Activated naive CD4-positive, alpha-beta T cell treated with anti-CD3 and anti-CD28 coated beads for 36 hours (primary cell): ENCODE measurements at regions of chr15 and their contacts with region 1.

Region 1: GRCh38 chr15:37100109-37100965 is at the start of gene MEIS2:
- DNase-seq: peak; percentile 51
- H3K4me3 Mint-ChIP-seq: peak within 1 kb of the TSS; percentile 89
- H3K27ac Mint-ChIP-seq: no peak within 1 kb of the TSS
- H3K4me1 Mint-ChIP-seq: peaks cover 45% of the 10 kb centered on the region
- H3K27me3 Mint-ChIP-seq: peaks cover 88% of the 10 kb centered on the region
- total RNA-seq, gene MEIS2: not detected

Region 2: GRCh38 chr15:35519541-35520149 is 1580.7 kb before region 1 on chr15:
- CTCF ChIA-PET with region 1: no interaction called
- intact Hi-C with region 1: loop called (anchors 10 kb)
- DNase-seq: no peak
- H3K4me3 Mint-ChIP-seq: no peak overlapping the region
- H3K27ac Mint-ChIP-seq: no peak overlapping the region
- H3K4me1 Mint-ChIP-seq: peaks cover 6% of the 10 kb centered on the region
- H3K27me3 Mint-ChIP-seq: no peaks in the 10 kb centered on the region

Region 3: GRCh38 chr15:35545824-35546510 is 1554.4 kb before region 1 on chr15 and contains the start of gene DPH6:
- CTCF ChIA-PET with region 1: no interaction called
- intact Hi-C with region 1: loop called (anchors 10 kb)
- DNase-seq: peak; percentile 77
- H3K4me3 Mint-ChIP-seq: peak within 1 kb of the TSS; percentile 98
- H3K27ac Mint-ChIP-seq: peak within 1 kb of the TSS; percentile 97
- H3K4me1 Mint-ChIP-seq: peaks cover 28% of the 10 kb centered on the region
- H3K27me3 Mint-ChIP-seq: no peaks in the 10 kb centered on the region
- total RNA-seq, gene DPH6: 20.0 to 20.5 TPM

Region 4: DNA sequence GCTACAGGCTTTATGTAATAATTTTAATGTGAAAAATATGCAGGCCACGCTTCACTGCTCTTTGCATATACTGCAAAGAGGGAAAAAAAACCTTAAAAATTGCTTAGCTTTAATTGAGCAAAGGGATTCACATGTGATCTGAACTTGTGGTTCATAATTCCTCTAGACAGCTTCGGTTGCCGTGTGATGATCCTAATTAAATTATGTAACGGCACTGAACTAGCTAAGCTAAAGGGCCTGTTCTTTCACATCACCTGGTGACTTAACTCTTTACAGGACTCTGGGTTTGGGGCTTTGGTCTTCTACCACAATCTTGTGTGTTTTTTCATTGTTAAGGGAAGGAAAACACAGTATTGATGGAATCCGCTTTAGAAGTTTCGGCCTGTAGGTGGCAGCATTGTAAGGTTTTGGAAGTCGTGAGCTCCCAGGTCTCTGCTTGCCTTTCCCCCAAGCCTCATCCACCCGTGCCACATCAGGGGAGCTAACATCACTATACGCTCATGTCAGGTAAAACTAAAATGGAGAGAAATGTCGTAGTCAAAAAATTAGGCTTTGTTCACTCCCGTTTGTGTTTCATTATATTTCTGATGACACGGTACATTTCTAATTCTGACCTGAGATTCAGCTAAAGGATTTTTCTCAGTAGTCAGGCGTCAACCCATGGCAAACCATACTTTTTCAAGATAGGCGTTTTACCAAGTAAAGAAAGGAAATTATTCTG is 1348.8 kb before region 1 on chr15:
- CTCF ChIA-PET with region 1: no interaction called
- intact Hi-C with region 1: loop called (anchors 10 kb)
- DNase-seq: peak; percentile 73
- H3K4me3 Mint-ChIP-seq: no peak overlapping the region
- H3K27ac Mint-ChIP-seq: no peak overlapping the region
- H3K4me1 Mint-ChIP-seq: no peaks in the 10 kb centered on the region
- H3K27me3 Mint-ChIP-seq: peaks cover 9% of the 10 kb centered on the region

Region 5: DNA sequence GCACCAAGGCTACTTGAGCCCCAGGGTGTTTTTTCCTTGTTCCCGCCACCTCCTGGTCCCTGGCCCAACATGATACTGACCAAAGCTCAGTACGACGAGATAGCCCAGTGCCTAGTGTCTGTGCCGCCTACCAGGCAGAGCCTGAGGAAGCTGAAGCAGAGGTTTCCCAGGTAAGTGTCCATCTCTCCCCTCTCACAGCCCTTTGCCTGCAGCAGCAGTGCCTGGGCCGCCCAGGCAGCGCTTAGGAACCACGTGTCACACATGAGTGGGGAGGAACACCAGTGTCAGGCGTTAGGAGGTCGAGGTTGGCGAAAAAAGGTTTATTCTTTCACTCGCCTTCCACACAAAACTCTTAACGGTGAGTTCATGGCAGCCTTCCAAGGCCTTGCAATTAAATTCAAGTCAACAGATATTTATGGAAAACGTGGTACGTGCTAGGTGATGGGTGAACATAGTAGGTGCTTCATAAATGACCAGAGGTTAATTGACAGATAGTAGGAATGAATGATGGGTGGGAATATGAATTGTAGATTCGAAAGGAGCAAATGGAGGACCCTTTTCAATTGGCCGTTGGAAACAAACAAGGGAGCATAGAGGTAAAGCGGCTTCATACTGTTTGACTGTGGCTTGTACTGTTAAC is 520.4 kb before region 1 on chr15:
- CTCF ChIA-PET with region 1: no interaction called
- intact Hi-C with region 1: loop called (anchors 10 kb)
- DNase-seq: peak; percentile 36
- H3K4me3 Mint-ChIP-seq: peak overlapping the region; percentile 79
- H3K27ac Mint-ChIP-seq: peak overlapping the region; percentile 79
- H3K4me1 Mint-ChIP-seq: peaks cover 25% of the 10 kb centered on the region
- H3K27me3 Mint-ChIP-seq: no peaks in the 10 kb centered on the region

Region 6: DNA sequence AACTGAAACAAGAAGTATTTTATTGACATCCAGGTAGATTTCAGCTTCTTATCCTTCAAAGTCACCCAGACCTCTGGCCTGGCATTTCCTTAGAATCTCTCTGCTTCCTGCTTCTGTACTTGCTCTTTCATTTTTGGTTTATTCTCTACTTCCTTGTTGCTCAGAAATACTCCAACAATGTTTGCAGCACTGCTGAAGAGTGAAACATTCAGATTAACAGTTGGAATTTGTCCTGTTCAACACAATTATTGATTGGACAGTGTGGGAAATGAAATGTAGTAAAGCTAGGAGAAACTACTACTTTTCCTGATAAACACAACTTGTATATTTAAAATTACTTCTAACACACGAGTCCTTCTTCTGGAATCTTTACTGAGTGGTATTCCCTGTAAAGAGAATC is 81.0 kb after region 1 on chr15:
- CTCF ChIA-PET with region 1: no interaction called
- intact Hi-C with region 1: no loop called
- DNase-seq: no peak
- H3K4me3 Mint-ChIP-seq: no peak overlapping the region
- H3K27ac Mint-ChIP-seq: no peak overlapping the region
- H3K4me1 Mint-ChIP-seq: no peaks in the 10 kb centered on the region
- H3K27me3 Mint-ChIP-seq: peaks cover 3% of the 10 kb centered on the region